ENCODE measurements at regions of chr16 and their contacts with region 1.

Region 1: DNA sequence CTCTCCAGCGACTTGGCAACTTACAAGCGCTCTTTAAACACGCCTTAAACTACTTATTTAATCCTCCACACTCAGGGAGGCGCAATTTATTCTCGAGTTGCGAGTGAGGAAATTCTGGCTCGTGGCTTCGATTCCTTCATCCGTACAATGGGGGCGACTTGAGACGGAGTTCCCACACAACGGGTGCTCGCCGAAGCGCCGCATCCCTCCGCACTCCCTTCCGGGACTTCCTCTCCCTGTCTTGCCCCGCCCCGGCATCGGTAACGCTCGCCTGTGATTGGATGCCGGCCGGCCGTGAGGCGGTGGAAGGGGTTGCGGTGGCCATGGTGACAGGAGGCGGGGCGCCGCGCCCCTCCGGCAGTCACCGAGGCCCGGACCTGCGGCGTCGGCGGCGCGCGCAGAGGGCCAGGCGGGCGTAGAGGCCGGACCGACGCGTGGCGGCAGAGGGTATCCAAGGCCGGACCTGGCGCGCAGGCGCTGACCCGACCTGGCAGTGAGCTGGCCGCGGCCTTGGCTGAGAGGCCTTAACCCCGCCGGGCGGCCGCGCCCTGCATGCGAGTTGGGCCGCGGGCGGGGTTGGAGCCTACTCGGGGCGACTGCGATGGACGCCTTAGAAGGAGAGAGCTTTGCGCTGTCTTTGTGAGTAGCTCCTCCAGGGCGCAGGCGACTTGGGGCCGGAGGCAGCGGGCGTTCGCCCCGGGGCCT is at the start of gene ARL2BP:
- DNase-seq: peak; percentile 97
- H3K4me3 Mint-ChIP-seq: peak within 1 kb of the TSS; percentile 82
- H3K27ac Mint-ChIP-seq: peak within 1 kb of the TSS; percentile 97
- H3K4me1 Mint-ChIP-seq: peaks cover 10% of the 10 kb centered on the region
- H3K27me3 Mint-ChIP-seq: no peaks in the 10 kb centered on the region
- CTCF ChIP-seq: peak; percentile 8
- total RNA-seq, gene ARL2BP: 94.4 and 114 TPM in 2 replicates

Region 2: DNA sequence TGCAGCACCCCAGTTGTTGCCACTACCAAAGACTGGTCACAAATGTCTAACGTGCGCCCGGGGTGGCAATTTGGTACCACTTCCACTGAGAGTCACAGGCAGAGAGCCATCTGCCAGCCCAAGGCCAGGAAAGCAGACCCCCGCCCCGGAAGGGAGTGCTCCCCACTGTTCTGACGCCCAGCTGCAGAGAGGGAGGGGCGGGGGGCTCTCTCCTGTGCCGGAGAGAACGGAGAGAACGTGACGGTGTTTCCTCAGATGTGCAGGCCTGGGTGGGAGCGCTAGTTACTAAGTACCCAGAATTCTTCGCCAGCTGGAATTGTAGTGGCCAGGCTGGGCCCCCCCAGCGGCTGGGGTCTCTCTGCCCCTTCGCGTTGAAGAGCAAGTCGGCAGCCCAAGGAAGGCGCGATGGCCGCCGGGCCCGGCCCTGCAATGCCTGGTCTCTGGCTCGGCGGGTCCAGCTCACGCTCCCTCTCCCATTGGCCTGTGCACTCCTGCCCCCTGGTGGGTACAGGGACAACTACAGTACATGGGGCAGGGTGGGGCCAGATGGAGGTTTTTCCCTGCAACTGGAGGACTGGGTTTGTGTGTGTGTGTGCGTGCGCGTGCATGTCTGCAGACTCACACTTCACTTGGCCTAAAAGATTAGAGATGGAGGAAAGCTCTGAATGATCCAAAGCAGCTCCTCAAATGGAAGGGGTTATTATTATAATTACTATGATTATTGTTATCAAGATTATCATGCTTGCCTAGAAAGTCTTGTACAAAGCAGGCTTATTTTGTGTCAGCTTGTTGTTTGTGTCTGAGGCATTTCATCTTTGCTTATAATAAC is 926.7 kb before region 1 on chr16:
- CTCF ChIA-PET with region 1: no interaction called
- POLR2A ChIA-PET with region 1: no interaction called
- intact Hi-C with region 1: no loop called
- DNase-seq: peak; percentile 79
- H3K4me3 Mint-ChIP-seq: no peak overlapping the region
- H3K27ac Mint-ChIP-seq: no peak overlapping the region
- H3K4me1 Mint-ChIP-seq: no peaks in the 10 kb centered on the region
- H3K27me3 Mint-ChIP-seq: peaks cover 30% of the 10 kb centered on the region
- CTCF ChIP-seq: peak; percentile 96

Region 3: DNA sequence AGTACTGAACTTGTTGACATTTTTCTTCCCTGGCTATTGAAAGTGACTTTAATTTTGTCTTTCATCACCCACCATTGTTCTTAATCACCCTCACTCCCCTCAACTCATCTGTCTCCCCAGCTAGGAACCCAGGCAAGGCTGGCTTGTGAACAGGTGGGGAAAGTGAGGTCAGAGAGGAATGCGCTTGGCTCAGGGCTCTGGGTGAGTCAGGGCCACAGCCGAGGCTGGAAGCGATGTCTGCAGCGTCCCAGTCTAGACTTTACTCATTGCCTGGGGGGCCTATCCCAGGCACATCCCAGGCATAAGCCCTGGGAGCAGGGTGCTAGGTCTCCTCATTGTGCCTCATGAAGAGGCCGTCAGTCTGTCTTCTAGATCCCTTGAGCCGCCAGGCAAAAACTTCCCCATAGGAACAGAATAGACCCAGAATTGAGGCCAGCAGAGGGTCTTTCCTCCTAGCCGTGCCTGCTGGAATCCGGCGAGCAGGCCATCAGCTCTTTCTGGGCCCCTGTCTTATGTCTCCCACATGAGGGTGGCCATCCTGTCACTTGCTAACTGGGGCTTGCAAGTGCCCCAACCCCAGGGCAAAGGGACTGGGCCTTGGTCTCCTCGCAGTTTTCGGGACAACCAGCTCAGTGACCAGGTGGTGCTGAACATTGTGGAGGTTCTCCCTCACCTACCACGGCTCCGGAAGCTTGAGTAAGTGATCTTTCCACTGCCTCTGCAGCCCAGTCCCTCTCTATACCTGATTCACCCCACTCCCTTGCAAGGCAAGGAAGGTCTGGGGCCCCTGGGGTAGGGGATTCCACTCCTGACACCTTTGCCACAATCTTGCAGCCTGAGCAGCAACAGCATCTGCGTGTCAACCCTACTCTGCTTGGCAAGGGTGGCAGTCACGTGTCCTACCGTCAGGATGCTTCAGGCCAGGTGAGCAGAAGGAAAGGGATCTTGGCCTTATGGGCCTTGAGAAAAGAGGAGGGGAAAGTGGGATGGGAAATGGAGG is 215.5 kb before region 1 on chr16:
- CTCF ChIA-PET with region 1: no interaction called
- POLR2A ChIA-PET with region 1: no interaction called
- intact Hi-C with region 1: no loop called
- DNase-seq: peak; percentile 57
- H3K4me3 Mint-ChIP-seq: no peak overlapping the region
- H3K27ac Mint-ChIP-seq: no peak overlapping the region
- H3K4me1 Mint-ChIP-seq: peaks cover 6% of the 10 kb centered on the region
- H3K27me3 Mint-ChIP-seq: no peaks in the 10 kb centered on the region
- CTCF ChIP-seq: no peak

Region 4: DNA sequence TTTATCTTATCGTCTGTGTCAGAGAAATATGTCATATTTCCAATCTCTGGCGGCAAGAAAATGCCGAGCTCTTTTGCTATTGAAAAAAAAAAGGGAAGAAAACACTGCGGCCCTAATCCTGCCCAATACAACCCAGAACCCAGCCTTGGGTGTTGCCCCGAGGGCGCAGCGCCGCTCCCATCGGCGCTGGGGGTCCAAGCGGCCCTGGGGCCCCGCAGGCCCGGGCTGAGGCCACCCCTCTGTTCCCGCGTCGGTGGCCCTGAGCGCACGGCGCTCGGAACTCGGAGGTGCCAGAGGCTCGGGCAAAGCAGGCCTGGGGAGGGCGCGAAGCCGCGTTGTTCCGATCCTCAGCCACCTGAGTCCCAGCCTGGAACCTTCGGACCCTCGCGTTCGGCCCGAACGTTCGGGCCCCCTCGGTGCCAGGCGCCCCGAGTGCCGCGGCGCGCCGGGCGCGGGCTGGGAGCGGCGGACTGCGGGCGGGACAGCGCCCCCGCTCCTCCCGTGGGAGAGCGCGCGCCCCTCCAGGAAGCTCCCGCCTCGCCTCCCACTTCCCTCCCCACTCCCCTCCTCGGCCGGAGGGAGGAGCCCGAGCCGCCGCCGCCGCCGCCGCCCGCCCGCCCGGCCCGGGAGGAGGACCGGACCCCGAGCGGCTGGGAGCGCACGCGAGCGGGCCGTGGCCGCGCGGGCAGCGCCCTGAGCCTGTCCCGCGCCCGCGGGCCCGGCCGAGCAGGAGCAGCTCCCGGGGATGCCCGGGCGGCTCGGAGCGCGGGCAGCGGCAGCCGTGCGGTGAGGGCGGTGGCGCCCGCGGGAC is 152.7 kb before region 1 on chr16 and contains the start of gene CPNE2:
- CTCF ChIA-PET with region 1: no interaction called
- POLR2A ChIA-PET with region 1: no interaction called
- intact Hi-C with region 1: loop called (anchors 5 kb)
- DNase-seq: peak; percentile 44
- H3K4me3 Mint-ChIP-seq: peak within 1 kb of the TSS; percentile 69
- H3K27ac Mint-ChIP-seq: no peak within 1 kb of the TSS
- H3K4me1 Mint-ChIP-seq: no peaks in the 10 kb centered on the region
- H3K27me3 Mint-ChIP-seq: no peaks in the 10 kb centered on the region
- CTCF ChIP-seq: peak; percentile 9
- total RNA-seq, gene CPNE2: 6.7 and 9.6 TPM in 2 replicates

Region 5: GRCh38 chr16:57260294-57260929 is 15.5 kb after region 1 on chr16:
- CTCF ChIA-PET with region 1: interaction called, 3 read pairs
- POLR2A ChIA-PET with region 1: interaction called, 45 read pairs
- intact Hi-C with region 1: no loop called
- DNase-seq: peak; percentile 73
- H3K4me3 Mint-ChIP-seq: peak overlapping the region; percentile 47
- H3K27ac Mint-ChIP-seq: peak overlapping the region; percentile 93
- H3K4me1 Mint-ChIP-seq: peaks cover 20% of the 10 kb centered on the region
- H3K27me3 Mint-ChIP-seq: no peaks in the 10 kb centered on the region
- CTCF ChIP-seq: no peak

Region 6: DNA sequence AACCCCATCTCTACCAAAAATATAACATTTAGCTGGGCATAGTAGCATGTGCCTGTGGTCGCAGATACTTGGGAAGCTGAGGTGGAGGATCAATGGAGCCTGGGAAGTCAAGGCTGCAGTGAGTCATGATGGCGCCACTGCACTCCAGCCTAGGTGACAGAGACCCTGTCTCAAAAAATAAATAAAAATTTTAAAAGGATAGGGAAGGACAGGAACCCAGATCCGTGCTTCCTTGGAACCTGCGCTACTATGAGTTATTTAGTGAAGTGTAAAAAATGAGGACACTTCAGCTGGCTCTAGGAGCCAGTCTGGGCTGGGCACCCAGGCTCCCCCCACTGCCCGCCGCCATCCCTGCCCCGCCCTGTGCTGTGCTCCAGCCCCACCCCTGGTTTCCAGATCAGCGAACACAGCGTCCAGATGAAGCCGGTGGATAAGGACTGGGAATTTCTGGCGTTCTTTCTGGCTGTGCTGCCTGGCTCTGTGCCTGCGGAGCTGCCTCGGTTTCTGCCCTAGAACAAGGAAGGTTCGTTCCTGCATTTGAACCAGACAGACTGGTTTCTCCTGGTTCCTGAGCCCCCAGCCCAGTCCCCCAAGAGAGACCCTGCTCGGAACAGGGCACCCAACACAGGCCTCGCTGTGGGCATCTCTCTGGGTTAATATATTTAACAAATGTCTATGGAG is 21.1 kb after region 1 on chr16:
- CTCF ChIA-PET with region 1: interaction called, 3 read pairs
- POLR2A ChIA-PET with region 1: interaction called, 45 read pairs
- intact Hi-C with region 1: no loop called
- DNase-seq: peak; percentile 84
- H3K4me3 Mint-ChIP-seq: peak overlapping the region; percentile 69
- H3K27ac Mint-ChIP-seq: peak overlapping the region; percentile 89
- H3K4me1 Mint-ChIP-seq: peaks cover 25% of the 10 kb centered on the region
- H3K27me3 Mint-ChIP-seq: no peaks in the 10 kb centered on the region
- CTCF ChIP-seq: no peak

Region 7: GRCh38 chr16:57277586-57277985 is 32.7 kb after region 1 on chr16:
- CTCF ChIA-PET with region 1: interaction called, 3 read pairs
- POLR2A ChIA-PET with region 1: interaction called, 21 read pairs
- intact Hi-C with region 1: loop called (anchors 2 kb)
- DNase-seq: peak; percentile 94
- H3K4me3 Mint-ChIP-seq: peak overlapping the region; percentile 53
- H3K27ac Mint-ChIP-seq: peak overlapping the region; percentile 89
- H3K4me1 Mint-ChIP-seq: peaks cover 36% of the 10 kb centered on the region
- H3K27me3 Mint-ChIP-seq: no peaks in the 10 kb centered on the region
- CTCF ChIP-seq: no peak

Region 8: GRCh38 chr16:57383276-57384247 is 138.6 kb after region 1 on chr16:
- CTCF ChIA-PET with region 1: no interaction called
- POLR2A ChIA-PET with region 1: no interaction called
- intact Hi-C with region 1: no loop called
- DNase-seq: no peak
- H3K4me3 Mint-ChIP-seq: no peak overlapping the region
- H3K27ac Mint-ChIP-seq: no peak overlapping the region
- H3K4me1 Mint-ChIP-seq: peaks cover 8% of the 10 kb centered on the region
- H3K27me3 Mint-ChIP-seq: no peaks in the 10 kb centered on the region
- CTCF ChIP-seq: no peak